Heart left ventricle (tissue), 16 donors: ENCODE measurements at regions of chr6 and their contacts with region 1.

Region 1: GRCh38 chr6:127725821-127726220 is 148.8 kb downstream of the C6orf58 start:
- DNase-seq: no peak
- ATAC-seq: no peak
- H3K4me3 ChIP-seq: no peak overlapping the region
- H3K27ac ChIP-seq: no peak overlapping the region
- H3K4me1 ChIP-seq: no peaks in the 10 kb centered on the region
- H3K27me3 ChIP-seq: peaks cover 0 to 8% (median 0%) of the 10 kb centered on the region in 9 donors
- CTCF ChIP-seq: no peak
- POLR2A ChIP-seq: no peak

Region 2: DNA sequence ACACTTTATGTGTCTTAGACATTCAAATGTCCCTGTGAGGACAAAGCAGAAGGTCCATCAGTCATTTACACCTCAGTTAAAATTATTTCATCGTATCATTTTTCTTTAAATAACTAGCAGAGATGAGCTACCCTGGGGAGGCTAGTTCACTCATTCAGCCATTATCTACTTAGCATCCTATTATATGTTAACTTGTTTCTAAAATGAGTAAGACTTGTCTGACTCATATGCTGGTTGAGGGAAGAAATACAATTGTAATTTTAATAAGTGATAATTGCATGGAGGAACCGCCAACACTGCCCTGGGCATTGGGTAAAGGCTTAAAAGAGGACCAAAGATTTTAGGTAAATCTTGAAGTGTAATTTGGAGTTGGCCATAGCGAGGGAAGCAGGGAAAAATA is 807.0 kb after region 1 on chr6:
- intact Hi-C with region 1: loop called in 1 of 10 experiments (anchors 10 kb)
- DNase-seq: no peak
- ATAC-seq: no peak
- H3K4me3 ChIP-seq: no peak overlapping the region
- H3K27ac ChIP-seq: no peak overlapping the region
- H3K4me1 ChIP-seq: peaks cover 0 to 3% (median 0%) of the 10 kb centered on the region in 12 donors
- H3K27me3 ChIP-seq: no peaks in the 10 kb centered on the region
- CTCF ChIP-seq: no peak
- POLR2A ChIP-seq: no peak